ENCODE measurements at regions of chr12 and their contacts with region 1.

Region 1: DNA sequence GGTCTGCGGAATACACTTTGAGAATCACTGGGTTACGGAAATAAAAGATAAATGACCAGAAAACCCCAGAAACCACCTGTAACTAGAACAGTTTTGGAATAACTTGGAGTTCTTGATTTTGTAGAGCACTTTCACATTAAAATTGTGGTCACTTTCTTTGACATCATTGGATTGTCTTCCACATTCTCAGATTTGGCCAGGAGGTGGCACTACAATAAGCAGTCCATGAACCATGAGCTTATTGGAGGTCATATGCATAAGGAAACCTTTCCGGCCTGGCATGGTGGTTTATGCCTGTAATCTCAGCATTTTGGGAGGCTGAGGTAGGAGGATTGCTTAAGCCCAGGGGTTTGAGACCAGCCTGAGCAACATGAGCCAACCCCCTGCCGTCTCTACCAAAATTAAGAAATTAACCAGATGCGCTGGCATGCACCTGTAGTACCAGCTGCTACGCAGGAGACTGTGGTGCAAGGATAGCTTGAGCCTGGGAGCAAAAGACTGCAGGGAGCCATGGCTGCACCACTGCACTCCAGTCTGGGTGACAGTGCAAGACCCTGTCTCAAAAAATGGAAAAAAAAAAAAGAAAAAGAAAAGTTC is 107.7 kb upstream of the CAND1 start:
- DNase-seq: peak; percentile 11
- H3K4me3 ChIP-seq: no peak overlapping the region
- H3K27ac ChIP-seq: no peak overlapping the region
- H3K4me1 ChIP-seq: no peaks in the 10 kb centered on the region
- H3K27me3 ChIP-seq: no peaks in the 10 kb centered on the region; the same call in 1 of the 2 replicates
- CTCF ChIP-seq: peak; percentile 69
- EP300 ChIP-seq: no peak
- RAD21 ChIP-seq: peak; percentile 59

Region 2: DNA sequence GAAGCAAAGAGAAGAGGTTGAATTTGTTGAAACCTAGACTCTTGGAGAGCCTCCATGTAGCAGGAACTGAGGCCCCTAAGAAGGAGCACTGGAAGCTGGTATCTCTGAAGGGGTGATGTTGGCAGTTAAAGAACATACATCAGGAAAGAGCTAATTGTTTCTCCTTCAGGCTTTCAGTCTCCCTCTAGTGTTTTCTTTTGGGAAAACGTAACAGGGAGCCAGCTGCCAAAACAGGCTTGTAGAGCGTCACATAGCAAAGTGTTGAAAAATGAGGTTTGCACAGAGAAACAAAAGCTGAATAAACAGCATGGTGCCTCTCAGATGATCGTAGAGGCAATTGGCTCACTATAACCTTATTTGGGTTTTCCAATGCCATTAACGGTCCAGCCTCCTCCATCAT is 60.9 kb after region 1 on chr12:
- CTCF ChIA-PET with region 1: interaction called, 17 read pairs
- POLR2A ChIA-PET with region 1: no interaction called
- DNase-seq: no peak
- H3K4me3 ChIP-seq: no peak overlapping the region
- H3K27ac ChIP-seq: no peak overlapping the region
- H3K4me1 ChIP-seq: no peaks in the 10 kb centered on the region
- H3K27me3 ChIP-seq: no peaks in the 10 kb centered on the region
- CTCF ChIP-seq: peak; percentile 30
- EP300 ChIP-seq: no peak
- RAD21 ChIP-seq: peak; percentile 25; the same call in 1 of the 2 replicates